PC-3 (cell line): ENCODE measurements at regions of chr15 and their contacts with region 1.

Region 1: GRCh38 chr15:83287541-83288027 is 3.1 kb upstream of the BNC1 start:
- DNase-seq: peak; percentile 96
- ATAC-seq: peak; percentile 67
- H3K4me3 ChIP-seq: peak overlapping the region; percentile 41; the same call in 1 of the 2 replicates
- H3K27ac ChIP-seq: peak overlapping the region; percentile 94
- H3K4me1 ChIP-seq: peaks cover 68% of the 10 kb centered on the region
- H3K27me3 ChIP-seq: no peaks in the 10 kb centered on the region
- CTCF ChIP-seq: no peak

Region 2: GRCh38 chr15:83248151-83249029 is 39.2 kb before region 1 on chr15:
- CTCF ChIA-PET with region 1: no interaction called
- POLR2A ChIA-PET with region 1: interaction called, 3 read pairs
- intact Hi-C with region 1: loop called (anchors 5 kb)
- DNase-seq: peak; percentile 94
- ATAC-seq: peak; percentile 72
- H3K4me3 ChIP-seq: peak overlapping the region; percentile 43; the same call in 1 of the 2 replicates
- H3K27ac ChIP-seq: no peak overlapping the region
- H3K4me1 ChIP-seq: peaks cover 11% of the 10 kb centered on the region
- H3K27me3 ChIP-seq: no peaks in the 10 kb centered on the region
- CTCF ChIP-seq: peak; percentile 90

Region 3: DNA sequence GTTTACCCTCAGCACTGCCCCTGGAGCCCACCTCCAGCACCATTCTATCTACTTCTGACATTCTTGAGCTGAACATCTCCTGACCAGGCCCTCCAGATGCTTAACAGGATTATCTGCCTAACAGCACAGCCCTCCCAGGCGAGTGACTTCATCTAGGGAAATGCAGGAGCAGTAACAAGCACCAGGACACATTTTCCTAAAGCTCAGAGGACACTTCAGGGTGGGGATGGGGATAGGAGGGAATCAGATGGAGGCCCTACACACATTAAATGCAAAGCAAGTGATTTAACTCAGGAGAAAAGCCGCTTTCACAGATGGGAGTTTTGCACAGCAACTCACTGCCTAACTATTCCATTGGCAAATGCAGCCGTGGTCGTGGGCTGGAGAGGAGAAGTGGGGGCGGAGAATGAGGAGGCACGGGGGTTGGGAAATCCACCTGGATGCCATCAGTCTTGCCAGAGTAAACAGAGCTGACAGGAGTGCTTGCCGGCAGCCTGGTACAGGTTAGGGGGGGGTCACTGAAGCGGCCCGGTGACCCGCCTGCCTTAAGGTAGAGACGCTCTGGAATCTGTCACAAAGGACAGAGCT is 18.2 kb after region 1 on chr15:
- CTCF ChIA-PET with region 1: interaction called, 3 read pairs
- POLR2A ChIA-PET with region 1: interaction called, 14 read pairs
- intact Hi-C with region 1: no loop called
- DNase-seq: peak; percentile 87
- ATAC-seq: peak; percentile 62
- H3K4me3 ChIP-seq: peak overlapping the region; percentile 63
- H3K27ac ChIP-seq: peak overlapping the region; percentile 99
- H3K4me1 ChIP-seq: peaks cover 43% of the 10 kb centered on the region
- H3K27me3 ChIP-seq: no peaks in the 10 kb centered on the region
- CTCF ChIP-seq: no peak

Region 4: DNA sequence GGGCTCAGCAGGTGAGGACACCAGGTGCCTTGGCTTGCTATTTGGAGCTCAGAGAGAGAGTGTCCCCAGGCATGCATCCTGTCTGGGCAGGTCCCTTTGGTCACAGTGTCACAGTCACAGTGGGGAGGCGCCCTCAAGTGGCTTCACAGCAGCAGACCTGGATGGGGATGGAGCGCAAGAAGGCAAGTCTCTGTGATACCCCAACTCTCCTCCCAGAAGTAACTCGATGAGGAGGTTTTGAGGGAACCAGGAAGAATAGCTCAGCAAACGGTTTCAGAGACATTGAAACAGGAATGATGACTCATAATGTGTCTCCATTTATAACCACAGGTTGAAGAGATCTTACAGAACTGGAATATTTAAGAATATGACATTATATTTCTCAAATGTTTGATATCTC is 93.1 kb after region 1 on chr15:
- CTCF ChIA-PET with region 1: no interaction called
- POLR2A ChIA-PET with region 1: interaction called, 20 read pairs
- intact Hi-C with region 1: loop called (anchors 2 kb)
- DNase-seq: peak; percentile 78
- ATAC-seq: peak; percentile 44
- H3K4me3 ChIP-seq: no peak overlapping the region
- H3K27ac ChIP-seq: peak overlapping the region; percentile 99
- H3K4me1 ChIP-seq: peaks cover 48% of the 10 kb centered on the region
- H3K27me3 ChIP-seq: no peaks in the 10 kb centered on the region
- CTCF ChIP-seq: peak; percentile 63

Region 5: DNA sequence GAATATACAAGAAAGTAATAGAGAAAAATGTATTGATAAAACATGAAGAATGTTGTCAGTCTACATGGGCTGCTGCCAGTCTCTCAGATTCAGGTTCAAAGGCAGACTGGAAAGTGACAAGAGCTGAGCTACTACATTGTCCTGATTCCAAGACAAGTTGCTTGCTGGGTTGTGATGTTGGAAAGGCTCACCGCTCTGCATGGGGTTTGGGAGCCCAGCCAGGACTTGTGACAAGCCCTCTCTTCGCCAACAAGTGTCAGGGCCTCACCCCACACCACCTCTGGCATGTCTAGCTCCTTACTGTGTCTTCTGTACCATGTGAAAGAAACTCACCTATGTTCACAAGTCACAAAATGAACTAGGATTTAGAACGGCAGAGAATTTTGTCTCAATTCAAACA is 116.5 kb after region 1 on chr15:
- CTCF ChIA-PET with region 1: no interaction called
- POLR2A ChIA-PET with region 1: no interaction called
- intact Hi-C with region 1: no loop called
- DNase-seq: no peak
- ATAC-seq: no peak
- H3K4me3 ChIP-seq: no peak overlapping the region
- H3K27ac ChIP-seq: no peak overlapping the region
- H3K4me1 ChIP-seq: no peaks in the 10 kb centered on the region
- H3K27me3 ChIP-seq: no peaks in the 10 kb centered on the region
- CTCF ChIP-seq: no peak